Uterus (tissue), 4 donors: ENCODE measurements at regions of chr6 and their contacts with region 1.

Region 1: GRCh38 chr6:144710237-144710636 is 425.1 kb downstream of the UTRN start:
- DNase-seq: no peak
- H3K4me3 ChIP-seq: no peak overlapping the region
- H3K27ac ChIP-seq: no peak overlapping the region
- H3K4me1 ChIP-seq: no peaks in the 10 kb centered on the region
- H3K27me3 ChIP-seq: no peaks in the 10 kb centered on the region
- CTCF ChIP-seq: no peak
- POLR2A ChIP-seq: no peak

Region 2: GRCh38 chr6:143999406-143999805 is 710.8 kb before region 1 on chr6:
- intact Hi-C with region 1: no loop called
- DNase-seq: no peak
- H3K4me3 ChIP-seq: no peak overlapping the region
- H3K27ac ChIP-seq: no peak overlapping the region
- H3K4me1 ChIP-seq: no peaks in the 10 kb centered on the region
- H3K27me3 ChIP-seq: no peaks in the 10 kb centered on the region
- CTCF ChIP-seq: no peak
- POLR2A ChIP-seq: no peak

Region 3: DNA sequence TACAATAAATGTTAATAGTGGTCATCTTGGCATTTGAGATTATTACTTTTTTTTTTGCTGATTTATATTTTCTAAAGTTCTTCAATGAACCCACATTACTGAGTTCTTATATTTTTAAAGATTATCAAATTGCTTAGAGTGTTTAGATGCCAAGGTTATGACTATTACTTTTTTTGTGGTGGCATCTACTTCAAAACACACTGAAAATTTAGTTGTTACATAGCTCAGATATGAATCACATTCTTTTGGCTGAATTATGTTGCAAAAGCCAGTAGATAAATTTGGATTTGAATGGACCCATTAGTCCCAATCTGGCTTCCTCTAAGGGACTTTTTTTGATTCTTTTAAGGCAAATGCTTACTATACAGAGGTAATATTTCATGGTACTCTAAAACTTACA is 416.2 kb before region 1 on chr6:
- intact Hi-C with region 1: no loop called
- DNase-seq: no peak
- H3K4me3 ChIP-seq: no peak overlapping the region
- H3K27ac ChIP-seq: no peak overlapping the region
- H3K4me1 ChIP-seq: peaks cover 0 to 4% of the 10 kb centered on the region in 2 donors
- H3K27me3 ChIP-seq: no peaks in the 10 kb centered on the region
- CTCF ChIP-seq: no peak
- POLR2A ChIP-seq: no peak

Region 4: DNA sequence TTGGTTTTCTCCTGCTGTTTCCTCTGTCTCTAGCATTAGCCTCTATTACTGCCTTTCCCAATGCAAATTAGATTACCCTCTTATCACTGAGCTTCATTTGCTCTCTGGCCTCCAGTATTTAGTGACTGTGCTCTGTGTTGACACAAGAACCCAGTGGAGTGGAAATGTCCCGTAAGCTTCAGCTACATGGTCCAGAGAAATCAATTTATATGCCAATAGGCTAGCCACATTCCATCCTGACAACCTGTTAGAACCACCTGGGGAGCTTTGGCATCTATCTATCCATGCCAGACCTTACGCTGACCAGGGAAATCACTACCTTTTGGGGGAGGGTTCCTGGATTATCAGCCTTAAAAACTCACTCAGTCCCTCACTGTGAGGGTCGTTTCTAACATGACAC is 34.5 kb after region 1 on chr6:
- intact Hi-C with region 1: no loop called
- DNase-seq: no peak
- H3K4me3 ChIP-seq: no peak overlapping the region
- H3K27ac ChIP-seq: no peak overlapping the region
- H3K4me1 ChIP-seq: no peaks in the 10 kb centered on the region
- H3K27me3 ChIP-seq: no peaks in the 10 kb centered on the region
- CTCF ChIP-seq: no peak
- POLR2A ChIP-seq: no peak

Region 5: GRCh38 chr6:144778773-144779492 is 68.7 kb after region 1 on chr6:
- intact Hi-C with region 1: loop called (anchors 10 kb)
- DNase-seq: no peak
- H3K4me3 ChIP-seq: no peak overlapping the region
- H3K27ac ChIP-seq: no peak overlapping the region
- H3K4me1 ChIP-seq: no peaks in the 10 kb centered on the region
- H3K27me3 ChIP-seq: no peaks in the 10 kb centered on the region
- CTCF ChIP-seq: no peak
- POLR2A ChIP-seq: no peak